GM23248 (cell line): ENCODE measurements at regions of chr18 and their contacts with region 1.

Region 1: DNA sequence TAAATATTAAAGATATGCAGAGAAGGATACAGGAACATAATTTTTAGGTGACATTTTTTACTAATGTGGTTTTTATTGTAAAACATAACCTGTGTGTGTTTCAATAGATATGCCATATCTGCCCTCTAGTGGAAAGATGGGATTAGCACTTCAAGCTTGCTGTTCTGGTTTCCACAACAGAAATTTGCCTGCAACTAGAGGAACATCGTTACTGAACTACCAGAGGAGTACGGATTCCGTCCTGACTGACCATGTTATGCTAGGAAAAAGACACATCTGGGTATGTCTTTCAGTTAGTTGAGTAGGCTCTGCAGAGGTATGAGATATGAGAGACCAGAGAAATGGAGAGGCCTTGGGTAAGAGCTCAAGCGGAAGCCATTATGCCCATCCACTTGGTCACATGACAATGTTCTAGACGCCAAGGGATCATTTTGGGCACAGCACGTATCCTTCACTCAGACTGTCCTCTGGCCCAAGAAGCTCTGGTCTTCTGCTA is 104.9 kb downstream of the MBD2 start:
- DNase-seq: peak; percentile 75
- H3K4me3 ChIP-seq: 0 out of 2 replicates have a peak overlapping the region, but pooled peaks have one; percentile 20
- H3K27ac ChIP-seq: no peak overlapping the region
- H3K4me1 ChIP-seq: no peaks in the 10 kb centered on the region
- H3K27me3 ChIP-seq: no peaks in the 10 kb centered on the region

Region 2: DNA sequence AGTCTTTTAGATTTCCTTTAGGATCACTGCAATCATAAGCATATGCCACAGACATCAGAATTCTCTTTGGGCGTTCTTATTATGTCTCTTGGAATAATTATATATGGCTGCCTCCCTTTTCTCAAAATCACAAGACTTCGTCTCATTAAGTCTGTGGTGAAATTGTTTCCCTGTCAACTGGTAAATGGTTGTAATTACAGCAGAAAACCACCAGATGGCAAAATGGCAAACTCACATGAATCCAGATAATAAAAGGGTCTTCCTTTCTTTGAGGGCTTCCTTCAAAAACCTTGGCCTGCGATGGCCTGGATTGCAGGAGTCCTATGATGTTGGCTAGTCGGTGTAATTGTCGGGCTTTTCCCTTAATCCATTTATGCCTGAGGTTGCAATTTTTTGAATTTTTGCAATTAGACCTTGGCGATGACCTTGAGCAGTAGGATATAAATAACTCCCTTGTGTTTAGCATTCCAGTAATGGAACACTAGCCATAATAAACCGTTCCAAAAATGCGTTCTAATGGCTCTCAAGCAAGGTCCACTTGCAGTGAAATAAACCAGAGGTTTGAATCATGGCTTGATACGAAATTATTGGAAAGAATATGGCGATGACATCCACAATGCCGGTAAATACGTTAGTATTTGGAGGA is 551.5 kb before region 1 on chr18:
- in situ Hi-C with region 1: loop called (anchors 10 kb)
- DNase-seq: peak; percentile 50
- H3K4me3 ChIP-seq: no peak overlapping the region
- H3K27ac ChIP-seq: no peak overlapping the region
- H3K4me1 ChIP-seq: no peaks in the 10 kb centered on the region
- H3K27me3 ChIP-seq: no peaks in the 10 kb centered on the region

Region 3: GRCh38 chr18:53698907-53699306 is 420.7 kb before region 1 on chr18:
- in situ Hi-C with region 1: loop called (anchors 10 kb)
- DNase-seq: peak; percentile 64
- H3K4me3 ChIP-seq: no peak overlapping the region
- H3K27ac ChIP-seq: no peak overlapping the region
- H3K4me1 ChIP-seq: no peaks in the 10 kb centered on the region
- H3K27me3 ChIP-seq: 0 out of 2 replicates have a peak, but pooled peaks cover under 1% of the 10 kb centered on the region

Region 4: GRCh38 chr18:53850918-53851317 is 268.7 kb before region 1 on chr18:
- in situ Hi-C with region 1: no loop called
- DNase-seq: no peak
- H3K4me3 ChIP-seq: no peak overlapping the region
- H3K27ac ChIP-seq: no peak overlapping the region
- H3K4me1 ChIP-seq: no peaks in the 10 kb centered on the region
- H3K27me3 ChIP-seq: no peaks in the 10 kb centered on the region

Region 5: GRCh38 chr18:53909668-53910067 is 209.9 kb before region 1 on chr18:
- in situ Hi-C with region 1: loop called (anchors 10 kb)
- DNase-seq: peak; percentile 48
- H3K4me3 ChIP-seq: no peak overlapping the region
- H3K27ac ChIP-seq: no peak overlapping the region
- H3K4me1 ChIP-seq: no peaks in the 10 kb centered on the region
- H3K27me3 ChIP-seq: no peaks in the 10 kb centered on the region; the same call in 1 of the 2 replicates

Region 6: DNA sequence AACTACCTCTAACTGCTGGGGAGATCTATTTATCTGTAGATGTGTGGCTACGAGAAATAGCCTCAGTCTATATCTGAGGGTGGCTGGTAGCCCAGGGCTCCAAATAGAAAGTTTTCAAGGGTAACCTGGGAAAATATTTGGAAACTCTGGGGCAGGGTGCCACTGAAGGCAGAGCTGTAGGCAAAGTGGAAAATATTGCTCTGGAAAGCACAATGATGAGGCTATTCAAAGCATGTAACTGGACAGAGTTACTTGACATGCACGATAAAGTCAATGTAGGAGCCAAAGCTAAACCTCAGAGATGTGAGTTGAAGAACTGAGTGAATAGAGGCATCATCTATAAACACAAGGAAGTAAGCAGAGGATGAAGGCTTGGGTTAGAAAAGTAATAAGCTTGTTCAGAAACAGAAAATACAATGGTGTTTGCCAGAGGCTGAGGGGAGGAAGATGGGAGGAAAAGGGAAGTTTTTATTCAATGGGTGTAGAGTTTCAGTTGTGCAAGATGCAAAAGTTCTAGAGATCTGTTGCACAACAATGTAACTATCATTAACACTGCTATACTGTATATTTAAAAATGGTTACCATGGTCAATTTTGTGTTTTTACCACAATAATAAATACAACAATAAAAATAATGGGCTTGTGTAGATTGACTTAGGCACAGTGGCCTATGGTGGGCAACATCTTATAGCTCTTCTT is 66.7 kb before region 1 on chr18:
- in situ Hi-C with region 1: loop called (anchors 10 kb)
- DNase-seq: no peak
- H3K4me3 ChIP-seq: no peak overlapping the region
- H3K27ac ChIP-seq: no peak overlapping the region
- H3K4me1 ChIP-seq: no peaks in the 10 kb centered on the region
- H3K27me3 ChIP-seq: no peaks in the 10 kb centered on the region